Naive thymus-derived CD8-positive, alpha-beta T cell (primary cell): ENCODE measurements at regions of chr13 and their contacts with region 1.

Region 1: DNA sequence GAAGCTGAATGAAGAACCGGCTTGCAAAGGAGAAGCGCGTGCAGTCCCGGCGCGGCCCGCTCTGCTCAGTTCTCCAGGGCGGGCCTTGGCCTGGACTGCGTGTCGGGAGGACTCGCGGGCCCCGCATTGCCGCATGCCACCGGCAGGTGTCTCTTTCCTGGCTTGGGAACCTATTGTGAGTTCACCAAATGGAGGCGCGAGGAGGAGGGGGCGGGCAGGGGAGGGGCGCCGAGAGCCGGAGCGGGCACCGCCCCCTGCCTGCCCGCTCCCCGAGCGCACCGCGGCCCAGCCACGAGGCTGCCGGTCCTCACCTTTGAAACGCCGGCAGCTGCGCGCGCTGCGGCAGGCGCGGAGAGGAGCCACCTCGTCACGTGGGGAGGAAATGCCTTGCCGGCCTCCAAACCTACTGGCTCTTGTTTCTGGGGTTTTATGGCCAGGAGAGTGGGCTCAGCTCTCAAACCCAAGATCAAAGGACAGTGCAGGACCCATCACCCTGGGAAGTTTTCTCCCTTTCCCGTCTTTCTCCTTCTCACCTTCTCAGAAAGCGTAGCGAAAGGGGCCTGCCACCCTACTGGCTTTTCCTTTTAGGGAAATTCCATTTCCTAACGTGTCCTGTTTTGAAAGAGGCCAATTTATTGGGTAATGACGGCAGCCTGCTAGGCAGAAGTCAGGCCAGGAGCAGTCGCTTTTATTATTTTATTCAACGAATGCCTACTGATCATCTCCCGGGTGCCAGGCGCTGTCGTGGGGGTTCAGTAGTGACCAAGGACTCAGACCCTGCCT is 13.8 kb upstream of the UBE2L5 start:
- DNase-seq: peak; percentile 78 to 93 (median 86)
- ATAC-seq: peak; percentile 92 to 93
- H3K4me3 Mint-ChIP-seq: peak overlapping the region; percentile 62 to 81 (median 74)
- H3K27ac Mint-ChIP-seq: peak overlapping the region; percentile 72 to 92 (median 82)
- H3K4me1 Mint-ChIP-seq: peaks cover 14 to 41% (median 35%) of the 10 kb centered on the region in 4 donors
- H3K27me3 Mint-ChIP-seq: no peaks in the 10 kb centered on the region

Region 2: DNA sequence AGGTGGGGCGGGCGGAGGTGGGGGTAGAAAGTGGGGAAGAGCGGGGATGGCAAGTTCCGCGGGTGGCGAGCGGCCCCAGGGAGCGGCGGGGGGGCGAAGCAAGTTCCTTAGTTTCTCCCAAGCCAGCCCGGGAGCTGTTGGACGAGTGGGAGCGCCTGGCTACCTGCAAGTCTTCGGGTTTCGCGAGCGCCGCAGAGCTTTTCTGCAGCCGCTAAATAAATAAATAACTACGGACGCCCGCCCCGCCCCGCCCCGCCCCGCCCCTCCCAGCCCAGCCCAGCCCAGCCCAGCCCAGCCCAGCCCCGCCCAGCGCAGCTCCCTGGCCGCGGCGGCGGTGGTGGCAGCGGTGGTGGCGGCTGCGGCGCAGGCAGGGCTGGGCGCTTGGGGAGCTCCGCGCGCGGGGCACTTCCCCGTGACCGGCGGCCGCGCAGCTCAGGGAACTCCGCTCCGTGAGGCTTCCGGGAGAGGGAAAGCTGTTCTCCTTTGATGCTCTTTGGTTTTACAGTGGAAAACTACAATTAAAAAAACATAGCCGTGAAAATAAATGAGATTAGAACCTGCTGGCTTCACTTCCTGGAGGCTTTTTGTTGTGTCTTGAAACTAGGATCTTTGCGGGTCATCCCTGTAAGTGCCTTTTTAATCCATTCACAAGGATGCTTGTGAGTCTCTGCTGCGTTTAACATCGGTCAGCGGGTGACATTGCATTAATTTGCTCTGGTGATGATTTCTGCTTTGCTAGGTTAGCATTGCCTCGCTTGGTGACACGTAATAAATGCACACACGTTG is 13.7 kb after region 1 on chr13 and contains the start of gene UBE2L5:
- POLR2A ChIA-PET with region 1: interaction called, 11 read pairs
- DNase-seq: peak; percentile 49 to 73 (median 66)
- ATAC-seq: peak; percentile 91 to 94
- H3K4me3 Mint-ChIP-seq: peak within 1 kb of the TSS; percentile 78 to 95 (median 87)
- H3K27ac Mint-ChIP-seq: peak within 1 kb of the TSS; percentile 79 to 92 (median 88)
- H3K4me1 Mint-ChIP-seq: peaks cover 11 to 28% (median 24%) of the 10 kb centered on the region in 4 donors
- H3K27me3 Mint-ChIP-seq: no peaks in the 10 kb centered on the region
- polyA plus RNA-seq, gene UBE2L5: not detected